Gastrocnemius medialis (tissue), 4 donors: ENCODE measurements at regions of chr9 and their contacts with region 1.

Region 1: GRCh38 chr9:78769690-78770089 is 472.8 kb downstream of the PSAT1 start:
- DNase-seq: no peak
- ATAC-seq: no peak
- H3K4me3 ChIP-seq: no peak overlapping the region
- H3K27ac ChIP-seq: no peak overlapping the region
- H3K4me1 ChIP-seq: no peaks in the 10 kb centered on the region
- H3K27me3 ChIP-seq: no peaks in the 10 kb centered on the region
- CTCF ChIP-seq: no peak
- POLR2A ChIP-seq: no peak

Region 2: GRCh38 chr9:78707481-78707991 is 62.2 kb before region 1 on chr9:
- in situ Hi-C with region 1: loop called in 1 of 4 experiments (anchors 10 kb)
- intact Hi-C with region 1: no loop called
- DNase-seq: no peak
- ATAC-seq: no peak
- H3K4me3 ChIP-seq: no peak overlapping the region
- H3K27ac ChIP-seq: no peak overlapping the region
- H3K4me1 ChIP-seq: no peaks in the 10 kb centered on the region
- H3K27me3 ChIP-seq: no peaks in the 10 kb centered on the region
- CTCF ChIP-seq: no peak
- POLR2A ChIP-seq: no peak